OCI-LY7 (cell line): ENCODE measurements at regions of chr6 and their contacts with region 1.

Region 1: DNA sequence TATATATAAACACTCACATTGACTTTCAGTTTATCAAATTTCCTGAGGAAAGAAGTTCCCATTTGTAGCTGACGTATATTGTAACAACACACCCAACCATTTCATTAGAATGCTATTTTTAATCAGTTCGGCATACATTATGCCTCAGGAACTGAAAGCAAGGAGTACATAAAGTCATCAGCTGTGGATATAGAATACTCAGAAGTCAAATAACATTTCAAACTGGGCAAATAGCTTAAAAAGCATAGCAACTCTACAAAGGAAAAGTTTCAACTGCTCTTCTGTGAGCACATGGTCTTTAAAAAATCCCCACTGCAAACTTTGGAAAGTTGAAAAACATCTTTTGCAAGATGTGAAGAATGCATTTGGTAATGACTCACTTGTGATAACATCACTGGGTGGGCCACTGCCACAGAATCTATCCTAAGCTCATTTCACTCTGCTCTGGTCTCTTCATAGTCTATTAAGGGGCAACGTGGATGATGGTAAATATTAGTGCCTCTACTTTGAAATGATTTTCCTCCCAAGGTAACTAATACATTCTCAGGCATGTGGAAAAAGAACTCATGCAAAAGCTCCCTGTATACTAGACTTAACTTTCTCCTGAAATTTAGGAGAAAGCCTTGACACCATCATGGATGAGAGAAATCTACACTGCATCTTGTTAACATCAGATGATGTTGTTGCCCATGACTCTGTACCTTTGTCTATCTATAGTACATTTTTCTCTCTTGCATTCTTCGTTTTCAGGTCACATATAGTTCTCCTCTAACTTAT is 49.2 kb downstream of the FYN start:
- DNase-seq: no peak
- H3K4me3 ChIP-seq: no peak overlapping the region
- H3K27ac ChIP-seq: no peak overlapping the region
- H3K4me1 ChIP-seq: peaks cover 6% of the 10 kb centered on the region
- CTCF ChIP-seq: no peak

Region 2: GRCh38 chr6:111677249-111677990 is 146.6 kb before region 1 on chr6:
- CTCF ChIA-PET with region 1: no interaction called
- POLR2A ChIA-PET with region 1: no interaction called
- intact Hi-C with region 1: no loop called
- DNase-seq: no peak
- H3K4me3 ChIP-seq: no peak overlapping the region
- H3K27ac ChIP-seq: no peak overlapping the region
- H3K4me1 ChIP-seq: no peaks in the 10 kb centered on the region
- CTCF ChIP-seq: no peak

Region 3: GRCh38 chr6:111841822-111842221 is 17.8 kb after region 1 on chr6:
- CTCF ChIA-PET with region 1: no interaction called
- POLR2A ChIA-PET with region 1: interaction called, 20 read pairs
- intact Hi-C with region 1: no loop called
- DNase-seq: peak; percentile 43
- H3K4me3 ChIP-seq: no peak overlapping the region
- H3K27ac ChIP-seq: no peak overlapping the region
- H3K4me1 ChIP-seq: peaks cover 33% of the 10 kb centered on the region
- CTCF ChIP-seq: no peak

Region 4: GRCh38 chr6:111850295-111850937 is 26.4 kb after region 1 on chr6:
- CTCF ChIA-PET with region 1: no interaction called
- POLR2A ChIA-PET with region 1: interaction called, 11 read pairs
- intact Hi-C with region 1: no loop called
- DNase-seq: no peak
- H3K4me3 ChIP-seq: no peak overlapping the region
- H3K27ac ChIP-seq: no peak overlapping the region
- H3K4me1 ChIP-seq: peaks cover 10% of the 10 kb centered on the region
- CTCF ChIP-seq: no peak